ENCODE measurements at regions of chr11 and their contacts with region 1.

Region 1: DNA sequence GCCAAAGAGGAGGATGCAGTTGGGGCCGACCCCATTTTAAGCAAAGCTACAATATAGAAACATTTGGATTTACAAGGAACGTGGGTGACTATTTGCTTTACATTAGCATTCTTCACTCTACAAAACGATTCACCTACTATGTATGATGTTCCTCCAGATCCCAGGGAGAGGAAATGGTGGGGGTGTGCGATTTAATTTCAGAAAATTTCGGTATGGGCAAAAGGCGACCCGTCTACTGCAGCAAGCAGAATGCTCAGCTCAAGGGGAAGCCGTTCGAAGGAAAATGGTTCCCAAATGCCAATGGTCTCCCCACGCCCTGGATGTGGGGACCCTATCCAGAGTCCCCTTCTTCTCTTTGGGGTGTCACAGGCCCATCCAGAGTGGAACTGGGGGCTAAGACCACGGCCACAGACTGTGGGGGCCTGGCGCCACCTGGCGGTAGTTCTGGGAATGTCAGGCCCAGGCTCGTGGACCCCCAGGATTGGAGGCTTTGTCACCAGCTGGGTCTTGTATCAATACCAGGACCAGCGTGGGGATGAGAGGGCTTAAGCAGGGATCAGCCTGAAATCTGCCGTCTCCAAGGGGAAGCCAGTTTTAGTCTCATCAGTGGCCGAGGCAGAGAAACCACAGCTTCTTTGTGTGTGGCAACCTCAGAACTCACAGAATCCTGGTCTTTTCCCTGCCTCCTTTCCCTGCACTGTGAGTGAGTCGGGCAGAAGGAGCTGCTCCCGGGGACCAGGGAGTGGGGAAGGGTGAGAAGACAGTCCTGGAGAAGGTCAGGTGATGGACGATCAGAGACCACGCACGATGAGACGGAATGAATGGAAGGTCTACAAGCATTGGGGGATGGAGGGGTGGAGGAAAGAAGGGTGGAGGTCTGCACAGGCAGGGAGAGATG is 8.4 kb downstream of the LRRC10B start:
- DNase-seq: peak; percentile 66
- ATAC-seq: peak; percentile 72
- H3K4me3 Mint-ChIP-seq: no peak overlapping the region
- H3K27ac Mint-ChIP-seq: no peak overlapping the region
- H3K4me1 Mint-ChIP-seq: no peaks in the 10 kb centered on the region
- H3K27me3 Mint-ChIP-seq: peaks cover 2% of the 10 kb centered on the region

Region 2: GRCh38 chr11:61369372-61370219 is 147.3 kb before region 1 on chr11:
- CTCF ChIA-PET with region 1: no interaction called
- DNase-seq: no peak
- ATAC-seq: no peak
- H3K4me3 Mint-ChIP-seq: no peak overlapping the region
- H3K27ac Mint-ChIP-seq: peak overlapping the region; percentile 22
- H3K4me1 Mint-ChIP-seq: peaks cover 19% of the 10 kb centered on the region
- H3K27me3 Mint-ChIP-seq: no peaks in the 10 kb centered on the region

Region 3: GRCh38 chr11:61446211-61446651 is 70.7 kb before region 1 on chr11:
- CTCF ChIA-PET with region 1: interaction called, 49 read pairs
- DNase-seq: peak; percentile 87
- ATAC-seq: peak; percentile 88
- H3K4me3 Mint-ChIP-seq: no peak overlapping the region
- H3K27ac Mint-ChIP-seq: no peak overlapping the region
- H3K4me1 Mint-ChIP-seq: peaks cover 16% of the 10 kb centered on the region
- H3K27me3 Mint-ChIP-seq: no peaks in the 10 kb centered on the region

Region 4: GRCh38 chr11:61477727-61478148 is 39.2 kb before region 1 on chr11:
- CTCF ChIA-PET with region 1: interaction called, 180 read pairs
- DNase-seq: peak; percentile 61
- ATAC-seq: peak; percentile 37
- H3K4me3 Mint-ChIP-seq: no peak overlapping the region
- H3K27ac Mint-ChIP-seq: no peak overlapping the region
- H3K4me1 Mint-ChIP-seq: peaks cover 2% of the 10 kb centered on the region
- H3K27me3 Mint-ChIP-seq: no peaks in the 10 kb centered on the region

Region 5: GRCh38 chr11:61503212-61503770 is 13.6 kb before region 1 on chr11:
- CTCF ChIA-PET with region 1: interaction called, 25 read pairs
- DNase-seq: peak; percentile 51
- ATAC-seq: peak; percentile 58
- H3K4me3 Mint-ChIP-seq: no peak overlapping the region
- H3K27ac Mint-ChIP-seq: peak overlapping the region; percentile 15
- H3K4me1 Mint-ChIP-seq: peaks cover 10% of the 10 kb centered on the region
- H3K27me3 Mint-ChIP-seq: peaks cover 34% of the 10 kb centered on the region

Region 6: DNA sequence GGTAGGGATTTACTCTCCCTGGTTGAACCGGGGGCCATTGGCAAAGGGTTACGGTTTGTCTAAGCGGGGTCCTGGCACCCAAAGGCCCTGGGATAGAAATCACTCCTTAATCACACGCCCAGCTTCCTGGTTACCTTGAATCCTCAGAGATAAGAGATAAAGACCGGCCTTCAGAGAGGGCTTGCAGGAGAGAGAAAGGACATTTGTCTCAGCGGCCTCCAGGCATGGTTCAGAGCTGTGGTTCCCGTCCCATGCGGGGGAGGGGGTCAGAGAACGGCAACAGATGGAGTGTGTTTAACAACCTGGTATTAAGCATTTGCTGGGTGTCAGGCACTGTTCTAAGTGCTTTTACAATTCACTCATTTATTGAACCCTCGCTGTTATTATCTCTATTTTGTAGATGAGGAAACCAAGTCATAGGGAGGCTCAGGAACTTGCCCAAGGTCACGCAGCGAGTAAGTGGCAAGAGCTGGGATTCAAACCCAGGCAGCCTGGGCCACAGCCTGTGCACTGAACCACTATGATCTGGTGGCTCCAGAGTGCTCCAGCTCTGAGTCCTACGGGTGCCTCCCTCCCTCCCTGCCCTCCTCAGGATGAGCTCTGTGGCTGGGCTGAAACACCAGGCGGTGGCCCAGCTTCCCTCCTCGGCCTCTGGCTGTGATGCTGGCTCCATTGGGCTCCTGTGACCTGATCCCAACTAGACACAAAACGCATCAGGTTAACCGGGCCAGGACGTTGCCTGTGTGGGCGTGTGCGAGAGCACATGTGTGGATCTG is 10.2 kb after region 1 on chr11:
- CTCF ChIA-PET with region 1: interaction called, 22 read pairs
- DNase-seq: no peak
- ATAC-seq: no peak
- H3K4me3 Mint-ChIP-seq: no peak overlapping the region
- H3K27ac Mint-ChIP-seq: no peak overlapping the region
- H3K4me1 Mint-ChIP-seq: no peaks in the 10 kb centered on the region
- H3K27me3 Mint-ChIP-seq: peaks cover 14% of the 10 kb centered on the region

Region 7: DNA sequence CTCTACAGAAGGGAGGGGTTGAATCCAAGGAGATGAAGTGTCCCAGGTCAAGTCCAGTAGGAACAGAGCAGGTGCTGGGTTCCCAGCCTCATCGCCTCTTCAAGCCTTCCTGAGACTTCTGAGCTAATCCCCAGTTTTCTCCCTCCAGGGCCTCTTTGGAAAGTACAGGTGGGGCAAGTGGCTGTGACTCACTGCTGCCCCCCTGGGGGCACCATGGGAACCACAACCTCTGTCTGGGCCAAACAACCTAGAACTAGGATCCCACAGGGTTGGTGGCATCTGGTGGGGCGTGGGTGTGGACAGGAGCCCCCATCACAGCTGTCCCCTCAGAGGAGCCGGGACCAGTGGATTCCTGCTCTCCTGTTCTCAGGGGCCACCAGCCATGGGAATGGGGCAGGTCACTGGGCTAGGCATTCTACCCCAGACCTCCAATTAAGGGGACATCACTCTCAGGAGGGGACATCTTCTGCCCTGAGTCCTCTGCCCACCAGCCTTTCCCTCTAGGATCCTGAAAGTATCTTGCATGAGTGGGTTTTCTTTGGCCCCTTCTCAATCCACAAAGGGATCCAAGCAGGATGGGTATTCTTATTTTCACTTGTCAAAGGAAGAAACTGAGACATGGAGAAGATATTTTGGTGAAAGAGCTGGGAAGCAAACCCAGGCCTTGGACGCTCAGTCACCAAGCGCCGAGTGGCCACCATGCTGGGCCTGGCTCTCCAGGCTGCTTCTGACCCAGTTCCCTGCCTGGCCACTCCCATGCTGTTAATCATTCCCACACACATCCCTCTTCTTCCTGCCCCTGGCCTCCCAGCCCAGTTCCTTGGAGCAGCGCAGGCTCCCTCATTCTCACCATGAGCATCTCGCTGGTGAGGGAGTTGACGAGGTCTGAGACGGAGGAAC is 15.5 kb after region 1 on chr11:
- CTCF ChIA-PET with region 1: interaction called, 22 read pairs
- DNase-seq: peak; percentile 49
- ATAC-seq: peak; percentile 73
- H3K4me3 Mint-ChIP-seq: no peak overlapping the region
- H3K27ac Mint-ChIP-seq: no peak overlapping the region
- H3K4me1 Mint-ChIP-seq: no peaks in the 10 kb centered on the region
- H3K27me3 Mint-ChIP-seq: peaks cover 4% of the 10 kb centered on the region

Region 8: GRCh38 chr11:61581030-61581928 is 64.4 kb after region 1 on chr11 and contains the start of gene SYT7:
- CTCF ChIA-PET with region 1: no interaction called
- DNase-seq: peak; percentile 94
- ATAC-seq: peak; percentile 87
- H3K4me3 Mint-ChIP-seq: peak within 1 kb of the TSS; percentile 64
- H3K27ac Mint-ChIP-seq: peak within 1 kb of the TSS; percentile 12
- H3K4me1 Mint-ChIP-seq: peaks cover 6% of the 10 kb centered on the region
- H3K27me3 Mint-ChIP-seq: peaks cover 48% of the 10 kb centered on the region
- total RNA-seq, gene SYT7: not detected